ENCODE measurements at regions of chr11 and their contacts with region 1.

Region 1: DNA sequence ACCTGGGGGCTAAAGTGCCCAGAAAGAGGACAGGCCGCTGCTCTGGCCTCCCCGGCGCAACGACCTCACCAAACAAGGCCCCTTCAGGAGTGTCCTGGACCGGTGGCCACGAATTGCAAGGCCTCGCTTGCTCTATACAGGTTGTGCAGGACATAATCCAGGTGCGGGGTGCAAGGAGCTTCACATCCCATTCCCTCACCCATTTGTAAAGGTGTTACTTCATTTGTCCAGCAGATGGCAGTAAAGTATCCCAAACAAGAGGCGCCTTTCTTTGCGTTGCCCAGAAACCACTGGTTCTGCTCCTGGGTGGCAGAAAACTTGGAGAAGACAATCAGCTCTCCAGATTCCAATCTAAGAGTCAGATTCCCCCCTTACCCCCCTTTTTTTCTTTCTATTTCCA is 35.9 kb upstream of the PRDM11 start:
- DNase-seq: no peak
- H3K4me3 ChIP-seq: no peak overlapping the region
- H3K27me3 ChIP-seq: peaks cover 6% of the 10 kb centered on the region
- CTCF ChIP-seq: peak; percentile 69

Region 2: GRCh38 chr11:45142241-45143055 is 31.9 kb after region 1 on chr11:
- CTCF ChIA-PET with region 1: interaction called, 13 read pairs
- POLR2A ChIA-PET with region 1: no interaction called
- DNase-seq: no peak
- H3K4me3 ChIP-seq: no peak overlapping the region
- H3K27me3 ChIP-seq: peaks cover 20% of the 10 kb centered on the region
- CTCF ChIP-seq: no peak

Region 3: GRCh38 chr11:45252134-45252855 is 141.7 kb after region 1 on chr11:
- CTCF ChIA-PET with region 1: interaction called, 11 read pairs
- POLR2A ChIA-PET with region 1: no interaction called
- DNase-seq: no peak
- H3K4me3 ChIP-seq: no peak overlapping the region
- H3K27me3 ChIP-seq: peaks cover 1% of the 10 kb centered on the region; the same call in 1 of the 2 replicates
- CTCF ChIP-seq: peak; percentile 60

Region 4: GRCh38 chr11:45294499-45294898 is 183.9 kb after region 1 on chr11:
- CTCF ChIA-PET with region 1: interaction called, 134 read pairs
- POLR2A ChIA-PET with region 1: no interaction called
- DNase-seq: no peak
- H3K4me3 ChIP-seq: no peak overlapping the region
- H3K27me3 ChIP-seq: peaks cover 2% of the 10 kb centered on the region
- CTCF ChIP-seq: no peak

Region 5: GRCh38 chr11:45332276-45332934 is 221.8 kb after region 1 on chr11:
- CTCF ChIA-PET with region 1: interaction called, 73 read pairs
- POLR2A ChIA-PET with region 1: no interaction called
- DNase-seq: no peak
- H3K4me3 ChIP-seq: no peak overlapping the region
- H3K27me3 ChIP-seq: peaks cover 4% of the 10 kb centered on the region
- CTCF ChIP-seq: peak; percentile 73

Measured in BJ (cell line).